Calu3 (cell line): ENCODE measurements at regions of chr9 and their contacts with region 1.

Region 1: DNA sequence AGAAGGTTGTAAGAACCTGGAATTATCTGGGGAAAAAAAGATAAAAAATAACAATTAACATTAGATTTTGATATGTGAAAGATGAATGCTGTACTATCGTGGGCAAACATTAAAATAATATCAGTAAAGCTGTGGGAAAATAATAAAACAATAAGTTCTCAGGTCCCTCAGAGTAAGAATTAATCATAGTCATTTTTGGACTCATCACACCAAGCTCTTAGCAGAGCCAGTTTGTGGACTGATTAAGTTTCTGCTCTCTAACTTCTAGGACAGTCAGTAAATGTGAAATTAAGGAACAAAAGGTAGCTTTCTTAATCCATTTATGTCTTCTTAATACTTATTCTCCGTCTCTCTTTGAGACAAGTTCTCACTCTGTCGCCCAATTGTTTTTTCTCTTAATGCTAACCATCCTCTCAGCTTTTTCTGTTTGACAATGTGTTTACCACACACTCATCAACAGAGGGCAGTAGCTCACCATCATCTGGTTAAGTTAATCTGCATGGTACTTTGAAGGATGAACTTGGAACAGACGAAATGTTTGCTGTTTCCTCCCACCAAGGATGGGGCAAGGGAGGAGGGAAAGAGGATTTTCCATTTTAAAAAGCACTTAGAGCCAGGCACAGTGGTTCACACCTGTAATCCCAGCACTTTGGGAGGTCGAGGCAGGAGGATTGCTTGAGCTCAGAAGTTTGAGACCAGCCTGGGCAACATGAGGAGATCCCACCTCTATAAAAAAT is 5.3 kb upstream of the ACO1 start:
- DNase-seq: peak; percentile 55
- H3K4me3 Mint-ChIP-seq: no peak overlapping the region
- H3K27ac Mint-ChIP-seq: no peak overlapping the region
- H3K4me1 Mint-ChIP-seq: no peaks in the 10 kb centered on the region
- H3K27me3 Mint-ChIP-seq: peaks cover 14% of the 10 kb centered on the region
- CTCF ChIP-seq: peak; percentile 56

Region 2: GRCh38 chr9:32431940-32432555 is 52.9 kb after region 1 on chr9:
- CTCF ChIA-PET with region 1: interaction called, 17 read pairs
- intact Hi-C with region 1: no loop called
- DNase-seq: peak; percentile 43
- H3K4me3 Mint-ChIP-seq: no peak overlapping the region
- H3K27ac Mint-ChIP-seq: peak overlapping the region; percentile 35
- H3K4me1 Mint-ChIP-seq: peaks cover 23% of the 10 kb centered on the region
- H3K27me3 Mint-ChIP-seq: no peaks in the 10 kb centered on the region
- CTCF ChIP-seq: peak; percentile 57

Region 3: GRCh38 chr9:32571969-32572899 is 193.1 kb after region 1 on chr9:
- CTCF ChIA-PET with region 1: interaction called, 30 read pairs
- intact Hi-C with region 1: loop called (anchors 1 kb)
- DNase-seq: peak; percentile 57
- H3K4me3 Mint-ChIP-seq: peak overlapping the region; percentile 95
- H3K27ac Mint-ChIP-seq: peak overlapping the region; percentile 90
- H3K4me1 Mint-ChIP-seq: no peaks in the 10 kb centered on the region
- H3K27me3 Mint-ChIP-seq: no peaks in the 10 kb centered on the region
- CTCF ChIP-seq: no peak

Region 4: DNA sequence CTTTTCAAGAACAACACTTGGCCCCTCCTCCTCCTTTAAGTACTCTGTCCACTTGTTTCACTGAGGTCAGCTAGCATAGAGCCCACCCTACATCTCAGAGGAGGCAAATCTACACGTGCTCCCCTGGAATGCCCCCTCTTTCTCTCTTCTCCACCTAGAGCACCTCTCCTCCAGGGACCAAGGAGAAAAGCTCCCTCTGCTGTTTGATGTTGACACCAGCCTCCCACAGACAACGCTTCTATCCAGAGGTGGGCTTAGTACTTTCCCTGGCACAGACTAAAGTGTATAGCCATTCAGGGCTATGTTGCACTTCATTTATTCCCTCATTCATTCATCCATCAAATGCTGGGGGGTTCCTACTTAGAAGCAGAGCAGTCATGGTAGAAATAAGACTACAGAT is 324.5 kb after region 1 on chr9:
- CTCF ChIA-PET with region 1: interaction called, 3 read pairs
- intact Hi-C with region 1: loop called (anchors 5 kb)
- DNase-seq: no peak
- H3K4me3 Mint-ChIP-seq: no peak overlapping the region
- H3K27ac Mint-ChIP-seq: no peak overlapping the region
- H3K4me1 Mint-ChIP-seq: peaks cover 20% of the 10 kb centered on the region
- H3K27me3 Mint-ChIP-seq: peaks cover 10% of the 10 kb centered on the region
- CTCF ChIP-seq: no peak